ENCODE measurements at regions of chr14 and their contacts with region 1.

Region 1: GRCh38 chr14:52154992-52155650 is 86.3 kb upstream of the NID2 start:
- DNase-seq: peak in 1 of 2 donors; percentile 46
- ATAC-seq: peak; percentile 92 to 96 (median 94)
- H3K4me3 ChIP-seq: no peak overlapping the region
- H3K4me3 Mint-ChIP-seq: peak overlapping the region; percentile 82
- H3K27ac ChIP-seq: peak overlapping the region; percentile 55
- H3K27ac Mint-ChIP-seq: peak overlapping the region; percentile 86 to 90
- H3K4me1 ChIP-seq: peaks cover 58% of the 10 kb centered on the region
- H3K4me1 Mint-ChIP-seq: peaks cover 89 to 91% of the 10 kb centered on the region in 2 donors
- H3K27me3 ChIP-seq: no peaks in the 10 kb centered on the region
- H3K27me3 Mint-ChIP-seq: no peaks in the 10 kb centered on the region
- CTCF ChIP-seq: no peak

Region 2: GRCh38 chr14:52166822-52167221 is 11.7 kb after region 1 on chr14:
- intact Hi-C with region 1: no loop called
- DNase-seq: no peak
- ATAC-seq: no peak
- H3K4me3 ChIP-seq: no peak overlapping the region
- H3K4me3 Mint-ChIP-seq: no peak overlapping the region
- H3K27ac ChIP-seq: no peak overlapping the region
- H3K27ac Mint-ChIP-seq: no peak overlapping the region
- H3K4me1 ChIP-seq: no peaks in the 10 kb centered on the region
- H3K4me1 Mint-ChIP-seq: peaks cover 5 to 6% of the 10 kb centered on the region in 2 donors
- H3K27me3 ChIP-seq: no peaks in the 10 kb centered on the region
- H3K27me3 Mint-ChIP-seq: no peaks in the 10 kb centered on the region
- CTCF ChIP-seq: no peak

Region 3: GRCh38 chr14:52244997-52245396 is 89.9 kb after region 1 on chr14:
- intact Hi-C with region 1: loop called (anchors 5 kb)
- DNase-seq: no peak
- ATAC-seq: no peak
- H3K4me3 ChIP-seq: no peak overlapping the region
- H3K4me3 Mint-ChIP-seq: no peak overlapping the region
- H3K27ac ChIP-seq: no peak overlapping the region
- H3K27ac Mint-ChIP-seq: peak overlapping the region; percentile 84 to 85
- H3K4me1 ChIP-seq: peaks cover 34% of the 10 kb centered on the region
- H3K4me1 Mint-ChIP-seq: peaks cover 69 to 75% of the 10 kb centered on the region in 2 donors
- H3K27me3 ChIP-seq: no peaks in the 10 kb centered on the region
- H3K27me3 Mint-ChIP-seq: no peaks in the 10 kb centered on the region
- CTCF ChIP-seq: no peak